ENCODE measurements at regions of chr20 and their contacts with region 1.

Region 1: GRCh38 chr20:3068986-3069900 is 2.2 kb upstream of the OXT start:
- DNase-seq: peak in 11 of 14 experiments; percentile 35 to 70 (median 55)
- ATAC-seq: peak; percentile 59
- H3K4me3 ChIP-seq: no peak overlapping the region
- H3K4me3 Mint-ChIP-seq: peak overlapping the region; percentile 45
- H3K27ac ChIP-seq: no peak overlapping the region
- H3K27ac Mint-ChIP-seq: no peak overlapping the region
- H3K4me1 ChIP-seq: peaks cover 24% of the 10 kb centered on the region
- H3K4me1 Mint-ChIP-seq: peaks cover 36% of the 10 kb centered on the region
- H3K27me3 ChIP-seq: no peaks in the 10 kb centered on the region
- H3K27me3 Mint-ChIP-seq: no peaks in the 10 kb centered on the region
- CTCF ChIP-seq: peak; percentile 28

Region 2: DNA sequence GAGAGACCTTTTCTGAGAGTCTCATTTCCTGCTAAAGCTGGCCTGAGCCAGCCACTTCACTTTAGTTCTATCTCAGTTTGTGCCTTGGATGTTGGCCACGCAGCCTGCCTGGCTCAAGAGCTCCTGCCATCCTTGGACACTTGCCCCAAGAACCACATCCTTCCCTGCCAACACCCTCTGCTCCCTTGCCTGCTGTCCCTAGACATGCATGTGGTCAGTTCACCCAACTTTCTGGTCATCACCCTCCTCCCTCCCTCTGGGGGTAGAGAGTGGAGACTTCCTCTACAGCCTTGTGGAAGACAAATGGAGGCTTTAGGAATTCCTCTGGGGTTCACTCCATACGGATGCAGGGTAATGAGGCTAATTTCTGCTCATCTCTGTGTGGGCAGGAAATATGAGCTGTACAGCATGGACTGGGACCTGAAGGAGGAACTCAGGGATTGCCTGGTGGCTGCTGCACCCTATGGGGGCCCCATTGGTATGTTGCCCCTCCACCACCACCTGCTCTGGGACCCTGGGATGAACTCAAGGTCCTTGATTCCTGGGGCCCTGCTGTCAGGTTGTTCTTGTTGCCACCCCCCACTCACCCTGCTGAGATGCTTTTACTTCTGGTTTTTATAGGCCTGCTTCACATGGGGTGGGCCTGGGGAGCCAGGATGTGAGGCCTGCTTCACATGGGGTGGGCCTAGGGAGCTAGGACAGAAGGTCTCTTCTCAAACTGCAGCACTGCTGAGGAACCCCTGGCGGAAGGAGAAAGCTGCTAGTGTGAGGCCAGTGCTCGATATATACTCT is 209.7 kb before region 1 on chr20:
- CTCF ChIA-PET with region 1: no interaction called
- POLR2A ChIA-PET with region 1: no interaction called
- intact Hi-C with region 1: no loop called
- DNase-seq: no peak
- ATAC-seq: no peak
- H3K4me3 ChIP-seq: no peak overlapping the region
- H3K4me3 Mint-ChIP-seq: no peak overlapping the region
- H3K27ac ChIP-seq: no peak overlapping the region
- H3K27ac Mint-ChIP-seq: no peak overlapping the region
- H3K4me1 ChIP-seq: no peaks in the 10 kb centered on the region
- H3K4me1 Mint-ChIP-seq: no peaks in the 10 kb centered on the region
- H3K27me3 ChIP-seq: no peaks in the 10 kb centered on the region
- H3K27me3 Mint-ChIP-seq: no peaks in the 10 kb centered on the region
- CTCF ChIP-seq: no peak

Region 3: DNA sequence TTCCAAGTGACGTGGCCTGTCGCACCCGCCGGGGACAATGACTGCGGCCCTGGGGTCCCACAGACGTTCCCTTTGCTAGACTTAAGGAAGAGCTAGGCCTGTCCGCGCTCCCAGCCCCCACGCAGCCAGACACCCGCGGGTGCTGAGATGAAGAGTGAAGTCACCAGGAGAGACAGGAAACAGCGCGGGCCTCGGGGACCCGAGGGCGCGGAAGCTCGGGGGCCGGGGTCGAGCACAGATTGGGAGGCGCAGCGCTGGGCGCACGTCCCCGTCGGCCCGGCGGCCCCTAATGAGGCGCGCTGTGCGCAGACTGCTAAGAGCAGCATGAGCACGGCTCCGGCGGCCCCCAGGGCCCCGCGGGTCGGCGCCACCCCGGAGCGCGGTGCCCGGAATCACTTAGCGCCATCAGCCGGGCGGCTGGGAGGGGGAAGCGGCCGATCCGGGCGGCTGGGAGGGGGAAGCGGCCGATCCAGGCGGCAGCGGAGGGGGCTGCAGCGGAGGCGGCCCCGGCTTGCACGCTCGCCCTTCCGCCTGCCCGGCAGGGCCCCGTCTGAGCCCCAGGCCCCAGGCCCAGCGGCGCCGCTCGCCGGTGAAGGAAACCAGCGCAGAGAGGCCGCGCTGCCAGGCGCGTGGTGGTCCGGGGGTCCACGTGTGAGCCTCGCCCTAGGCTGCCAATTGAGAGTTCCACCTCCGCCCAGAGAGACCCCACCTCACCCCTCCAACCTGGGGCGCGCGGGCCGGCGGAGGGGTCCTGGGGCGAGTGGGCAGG is 23.6 kb after region 1 on chr20:
- CTCF ChIA-PET with region 1: interaction called, 3 read pairs
- POLR2A ChIA-PET with region 1: interaction called, 48 read pairs
- intact Hi-C with region 1: loop called (anchors 2 kb)
- DNase-seq: peak; percentile 25 to 70 (median 52)
- ATAC-seq: peak; percentile 21
- H3K4me3 ChIP-seq: peak overlapping the region; percentile 47
- H3K4me3 Mint-ChIP-seq: peak overlapping the region; percentile 95
- H3K27ac ChIP-seq: peak overlapping the region; percentile 76 to 86
- H3K27ac Mint-ChIP-seq: peak overlapping the region; percentile 100
- H3K4me1 ChIP-seq: peaks cover 26% of the 10 kb centered on the region
- H3K4me1 Mint-ChIP-seq: peaks cover 40% of the 10 kb centered on the region
- H3K27me3 ChIP-seq: peaks cover 0 to 11% of the 10 kb centered on the region in 2 experiments
- H3K27me3 Mint-ChIP-seq: peaks cover 8% of the 10 kb centered on the region
- CTCF ChIP-seq: no peak

Region 4: DNA sequence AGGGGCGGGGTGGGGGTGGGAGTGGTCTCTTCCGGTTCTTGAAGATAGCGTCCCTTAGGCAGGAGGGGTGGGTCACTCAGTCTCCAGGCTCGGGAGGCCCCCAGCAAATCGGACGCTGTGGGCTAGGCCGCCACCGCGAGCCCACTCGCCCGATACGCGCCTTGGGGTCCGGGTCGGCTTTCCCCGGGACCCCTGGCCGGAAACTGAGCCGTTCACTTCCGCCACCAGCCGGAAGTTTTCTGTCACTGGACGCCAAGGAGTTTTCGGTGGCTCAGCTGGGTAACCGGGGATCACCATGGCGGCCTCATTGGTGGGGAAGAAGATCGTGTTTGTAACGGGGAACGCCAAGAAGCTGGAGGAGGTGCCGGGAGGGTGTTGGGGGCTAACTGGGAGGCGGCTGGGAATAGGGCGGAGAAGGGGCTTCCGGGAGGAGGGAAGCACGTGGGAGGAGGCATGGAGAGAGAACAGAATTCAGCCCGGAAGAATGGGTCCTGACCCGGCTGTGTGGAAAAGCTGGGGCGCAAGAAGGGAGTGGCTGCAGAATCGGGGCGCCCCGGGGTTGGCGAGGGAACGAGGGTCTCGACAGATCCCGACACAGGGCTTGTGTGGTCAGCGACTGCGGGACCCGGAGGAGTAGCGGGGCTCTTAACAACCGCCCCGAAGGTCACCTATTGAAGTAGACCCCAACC is 140.2 kb after region 1 on chr20 and contains the start of gene ITPA:
- CTCF ChIA-PET with region 1: no interaction called
- POLR2A ChIA-PET with region 1: no interaction called
- intact Hi-C with region 1: loop called in 1 of 2 experiments (anchors 5 kb)
- DNase-seq: peak; percentile 27 to 74 (median 50)
- ATAC-seq: peak; percentile 25
- H3K4me3 ChIP-seq: peak within 1 kb of the TSS; percentile 99
- H3K4me3 Mint-ChIP-seq: peak within 1 kb of the TSS; percentile 96
- H3K27ac ChIP-seq: peak within 1 kb of the TSS; percentile 73 to 89
- H3K27ac Mint-ChIP-seq: peak within 1 kb of the TSS; percentile 83
- H3K4me1 ChIP-seq: peaks cover 32% of the 10 kb centered on the region
- H3K4me1 Mint-ChIP-seq: peaks cover 30% of the 10 kb centered on the region
- H3K27me3 ChIP-seq: no peaks in the 10 kb centered on the region
- H3K27me3 Mint-ChIP-seq: no peaks in the 10 kb centered on the region
- CTCF ChIP-seq: no peak
- total RNA-seq, gene ITPA: 17.8 to 19.5 TPM

Region 5: GRCh38 chr20:3312940-3313682 is 243.9 kb after region 1 on chr20:
- CTCF ChIA-PET with region 1: no interaction called
- POLR2A ChIA-PET with region 1: no interaction called
- intact Hi-C with region 1: loop called in 1 of 2 experiments (anchors 5 kb)
- DNase-seq: no peak
- ATAC-seq: no peak
- H3K4me3 ChIP-seq: no peak overlapping the region
- H3K4me3 Mint-ChIP-seq: no peak overlapping the region
- H3K27ac ChIP-seq: no peak overlapping the region
- H3K27ac Mint-ChIP-seq: no peak overlapping the region
- H3K4me1 ChIP-seq: no peaks in the 10 kb centered on the region
- H3K4me1 Mint-ChIP-seq: no peaks in the 10 kb centered on the region
- H3K27me3 ChIP-seq: no peaks in the 10 kb centered on the region
- H3K27me3 Mint-ChIP-seq: no peaks in the 10 kb centered on the region
- CTCF ChIP-seq: no peak

Region 6: GRCh38 chr20:4227085-4227821 is 1158.0 kb after region 1 on chr20:
- CTCF ChIA-PET with region 1: no interaction called
- POLR2A ChIA-PET with region 1: no interaction called
- intact Hi-C with region 1: no loop called
- DNase-seq: no peak
- ATAC-seq: no peak
- H3K4me3 ChIP-seq: no peak overlapping the region
- H3K4me3 Mint-ChIP-seq: no peak overlapping the region
- H3K27ac ChIP-seq: no peak overlapping the region
- H3K27ac Mint-ChIP-seq: no peak overlapping the region
- H3K4me1 ChIP-seq: no peaks in the 10 kb centered on the region
- H3K4me1 Mint-ChIP-seq: peaks cover 4% of the 10 kb centered on the region
- H3K27me3 ChIP-seq: peaks cover 16 to 33% of the 10 kb centered on the region in 2 experiments
- H3K27me3 Mint-ChIP-seq: peaks cover 34% of the 10 kb centered on the region
- CTCF ChIP-seq: no peak